Activated B cell treated with CpG ODN at 0.5 μM for 24 hours (primary cell): ENCODE measurements at regions of chr6 and their contacts with region 1.

Region 1: GRCh38 chr6:144334131-144334708 is 49.1 kb downstream of the UTRN start:
- DNase-seq: peak; percentile 52
- ATAC-seq: peak; percentile 76
- H3K4me3 Mint-ChIP-seq: peak overlapping the region; percentile 78
- H3K27ac Mint-ChIP-seq: peak overlapping the region; percentile 88
- H3K4me1 Mint-ChIP-seq: peaks cover 71% of the 10 kb centered on the region
- H3K27me3 Mint-ChIP-seq: no peaks in the 10 kb centered on the region
- CTCF ChIP-seq: no peak

Region 2: GRCh38 chr6:144063744-144064401 is 270.3 kb before region 1 on chr6:
- CTCF ChIA-PET with region 1: no interaction called
- POLR2A ChIA-PET with region 1: no interaction called
- intact Hi-C with region 1: loop called (anchors 2 kb)
- DNase-seq: peak; percentile 91
- ATAC-seq: peak; percentile 93
- H3K4me3 Mint-ChIP-seq: peak overlapping the region; percentile 94
- H3K27ac Mint-ChIP-seq: peak overlapping the region; percentile 89
- H3K4me1 Mint-ChIP-seq: peaks cover 36% of the 10 kb centered on the region
- H3K27me3 Mint-ChIP-seq: no peaks in the 10 kb centered on the region
- CTCF ChIP-seq: no peak

Region 3: GRCh38 chr6:144265390-144265789 is 68.8 kb before region 1 on chr6:
- CTCF ChIA-PET with region 1: no interaction called
- POLR2A ChIA-PET with region 1: no interaction called
- intact Hi-C with region 1: loop called (anchors 1 kb)
- DNase-seq: no peak
- ATAC-seq: peak; percentile 97
- H3K4me3 Mint-ChIP-seq: no peak overlapping the region
- H3K27ac Mint-ChIP-seq: peak overlapping the region; percentile 63
- H3K4me1 Mint-ChIP-seq: peaks cover 23% of the 10 kb centered on the region
- H3K27me3 Mint-ChIP-seq: no peaks in the 10 kb centered on the region
- CTCF ChIP-seq: no peak

Region 4: GRCh38 chr6:144284783-144285547 is 49.3 kb before region 1 on chr6 and contains the start of gene UTRN:
- CTCF ChIA-PET with region 1: no interaction called
- POLR2A ChIA-PET with region 1: interaction called, 4 read pairs
- intact Hi-C with region 1: loop called (anchors 1 kb)
- DNase-seq: peak; percentile 44
- ATAC-seq: peak; percentile 54
- H3K4me3 Mint-ChIP-seq: peak within 1 kb of the TSS; percentile 94
- H3K27ac Mint-ChIP-seq: no peak within 1 kb of the TSS
- H3K4me1 Mint-ChIP-seq: peaks cover 19% of the 10 kb centered on the region
- H3K27me3 Mint-ChIP-seq: peaks cover 6% of the 10 kb centered on the region
- CTCF ChIP-seq: no peak
- total RNA-seq, gene UTRN: 52.2 and 53.5 TPM in 2 replicates

Region 5: DNA sequence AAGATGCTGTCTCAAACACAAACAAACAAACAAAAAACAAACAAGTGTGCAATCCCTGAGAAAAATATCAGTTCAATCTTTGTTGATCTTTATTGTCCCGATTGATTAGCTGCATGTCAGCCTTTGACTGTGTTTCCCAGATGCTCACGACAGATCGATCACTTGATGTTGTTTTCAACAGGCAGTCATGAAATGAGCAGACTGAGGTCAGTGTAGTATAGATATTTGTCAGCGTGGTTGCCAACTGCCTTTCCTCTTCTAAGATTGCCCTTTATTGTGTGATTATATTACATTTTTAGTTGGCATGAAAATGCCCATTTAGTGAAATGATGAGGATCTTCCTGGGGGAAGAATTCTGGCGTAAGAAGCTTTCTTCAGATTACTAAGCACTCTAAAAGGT is 23.5 kb before region 1 on chr6:
- CTCF ChIA-PET with region 1: no interaction called
- POLR2A ChIA-PET with region 1: no interaction called
- intact Hi-C with region 1: loop called (anchors 2 kb)
- DNase-seq: no peak
- ATAC-seq: no peak
- H3K4me3 Mint-ChIP-seq: peak overlapping the region; percentile 26
- H3K27ac Mint-ChIP-seq: no peak overlapping the region
- H3K4me1 Mint-ChIP-seq: peaks cover 20% of the 10 kb centered on the region
- H3K27me3 Mint-ChIP-seq: no peaks in the 10 kb centered on the region
- CTCF ChIP-seq: no peak

Region 6: GRCh38 chr6:144349690-144350527 is 15.7 kb after region 1 on chr6:
- CTCF ChIA-PET with region 1: no interaction called
- POLR2A ChIA-PET with region 1: interaction called, 16 read pairs
- intact Hi-C with region 1: loop called (anchors 1 kb)
- DNase-seq: no peak
- ATAC-seq: peak; percentile 38
- H3K4me3 Mint-ChIP-seq: peak overlapping the region; percentile 75
- H3K27ac Mint-ChIP-seq: peak overlapping the region; percentile 90
- H3K4me1 Mint-ChIP-seq: peaks cover 96% of the 10 kb centered on the region
- H3K27me3 Mint-ChIP-seq: no peaks in the 10 kb centered on the region
- CTCF ChIP-seq: no peak

Region 7: GRCh38 chr6:144434308-144434990 is 100.2 kb after region 1 on chr6:
- CTCF ChIA-PET with region 1: no interaction called
- POLR2A ChIA-PET with region 1: no interaction called
- intact Hi-C with region 1: no loop called
- DNase-seq: no peak
- ATAC-seq: no peak
- H3K4me3 Mint-ChIP-seq: no peak overlapping the region
- H3K27ac Mint-ChIP-seq: no peak overlapping the region
- H3K4me1 Mint-ChIP-seq: peaks cover 7% of the 10 kb centered on the region
- H3K27me3 Mint-ChIP-seq: no peaks in the 10 kb centered on the region
- CTCF ChIP-seq: no peak

Region 8: GRCh38 chr6:144482142-144482541 is 147.9 kb after region 1 on chr6:
- CTCF ChIA-PET with region 1: no interaction called
- POLR2A ChIA-PET with region 1: no interaction called
- intact Hi-C with region 1: loop called (anchors 5 kb)
- DNase-seq: peak; percentile 39
- ATAC-seq: peak; percentile 91
- H3K4me3 Mint-ChIP-seq: no peak overlapping the region
- H3K27ac Mint-ChIP-seq: peak overlapping the region; percentile 41
- H3K4me1 Mint-ChIP-seq: no peaks in the 10 kb centered on the region
- H3K27me3 Mint-ChIP-seq: no peaks in the 10 kb centered on the region
- CTCF ChIP-seq: no peak